ENCODE measurements at regions of chr12 and their contacts with region 1.

Region 1: DNA sequence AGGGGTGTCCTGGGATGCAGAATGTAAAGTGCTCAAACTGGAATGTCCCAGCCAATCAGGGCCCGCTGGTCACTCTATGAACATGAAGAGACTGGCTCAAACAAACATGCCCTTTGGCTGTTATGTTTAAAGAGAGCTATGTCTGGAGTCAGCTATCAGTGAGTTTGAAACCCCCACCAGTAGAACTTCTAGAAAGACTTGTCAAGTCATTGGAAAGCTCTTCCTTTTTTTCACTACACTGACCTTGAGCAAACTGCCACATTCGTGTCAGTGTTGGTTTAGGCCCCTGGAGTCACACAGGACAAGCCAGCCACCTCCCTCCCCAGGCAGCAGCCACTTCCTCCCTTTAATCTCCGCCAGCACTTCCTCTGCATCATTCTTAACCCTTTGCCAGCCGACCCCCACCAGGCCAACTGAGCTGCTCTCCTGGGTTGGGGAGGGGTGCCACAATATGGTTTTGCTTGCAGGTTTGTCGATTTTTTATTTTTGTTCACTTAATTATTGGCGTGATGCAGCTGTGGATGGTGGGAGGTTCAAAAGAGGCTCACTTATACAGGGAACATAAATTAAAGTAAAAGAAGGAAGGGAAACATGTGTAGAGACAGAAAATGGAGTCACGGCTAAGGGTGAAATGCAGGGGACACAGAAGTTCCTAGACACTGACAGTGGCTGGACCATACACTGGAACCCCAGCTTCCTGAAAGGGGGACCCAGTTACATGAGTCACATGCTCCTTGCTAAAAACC is 25.3 kb downstream of the CMKLR1 start:
- DNase-seq: peak in 3 of 9 experiments; percentile 32 to 51 (median 50)
- ATAC-seq: peak; percentile 71
- H3K4me3 ChIP-seq: no peak overlapping the region
- H3K4me3 Mint-ChIP-seq: peak overlapping the region; percentile 76
- H3K27ac ChIP-seq: peak overlapping the region in 1 of 2 experiments; percentile 39
- H3K27ac Mint-ChIP-seq: peak overlapping the region; percentile 85
- H3K4me1 ChIP-seq: peaks cover 25% of the 10 kb centered on the region
- H3K4me1 Mint-ChIP-seq: peaks cover 40% of the 10 kb centered on the region
- H3K27me3 ChIP-seq: no peaks in the 10 kb centered on the region
- H3K27me3 Mint-ChIP-seq: no peaks in the 10 kb centered on the region
- CTCF ChIP-seq: no peak

Region 2: DNA sequence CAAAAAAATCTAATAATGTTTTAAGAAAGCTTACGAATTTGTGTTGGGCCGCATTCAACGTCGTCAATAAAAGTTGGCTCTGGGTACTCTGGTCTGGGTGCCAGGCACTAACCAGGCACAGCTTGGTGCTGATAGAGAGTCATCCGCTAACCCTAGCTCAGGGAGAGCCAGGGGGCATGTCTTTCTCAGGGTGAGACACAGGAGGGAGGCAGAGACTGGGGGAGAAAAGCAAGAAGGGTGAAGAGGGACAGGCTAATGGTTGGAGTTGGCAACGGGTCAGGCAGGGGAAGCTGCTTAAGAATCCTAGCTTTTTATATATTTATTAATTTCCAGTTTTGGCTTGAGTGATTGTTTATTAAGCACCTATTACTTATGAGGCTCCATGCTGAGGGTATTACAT is 79.6 kb before region 1 on chr12:
- CTCF ChIA-PET with region 1: no interaction called
- POLR2A ChIA-PET with region 1: no interaction called
- intact Hi-C with region 1: no loop called
- DNase-seq: peak in 2 of 9 experiments; percentile 29 to 41
- ATAC-seq: no peak
- H3K4me3 ChIP-seq: no peak overlapping the region
- H3K4me3 Mint-ChIP-seq: no peak overlapping the region
- H3K27ac ChIP-seq: no peak overlapping the region
- H3K27ac Mint-ChIP-seq: no peak overlapping the region
- H3K4me1 ChIP-seq: no peaks in the 10 kb centered on the region
- H3K4me1 Mint-ChIP-seq: no peaks in the 10 kb centered on the region
- H3K27me3 ChIP-seq: no peaks in the 10 kb centered on the region
- H3K27me3 Mint-ChIP-seq: peaks cover 35% of the 10 kb centered on the region
- CTCF ChIP-seq: no peak

Region 3: DNA sequence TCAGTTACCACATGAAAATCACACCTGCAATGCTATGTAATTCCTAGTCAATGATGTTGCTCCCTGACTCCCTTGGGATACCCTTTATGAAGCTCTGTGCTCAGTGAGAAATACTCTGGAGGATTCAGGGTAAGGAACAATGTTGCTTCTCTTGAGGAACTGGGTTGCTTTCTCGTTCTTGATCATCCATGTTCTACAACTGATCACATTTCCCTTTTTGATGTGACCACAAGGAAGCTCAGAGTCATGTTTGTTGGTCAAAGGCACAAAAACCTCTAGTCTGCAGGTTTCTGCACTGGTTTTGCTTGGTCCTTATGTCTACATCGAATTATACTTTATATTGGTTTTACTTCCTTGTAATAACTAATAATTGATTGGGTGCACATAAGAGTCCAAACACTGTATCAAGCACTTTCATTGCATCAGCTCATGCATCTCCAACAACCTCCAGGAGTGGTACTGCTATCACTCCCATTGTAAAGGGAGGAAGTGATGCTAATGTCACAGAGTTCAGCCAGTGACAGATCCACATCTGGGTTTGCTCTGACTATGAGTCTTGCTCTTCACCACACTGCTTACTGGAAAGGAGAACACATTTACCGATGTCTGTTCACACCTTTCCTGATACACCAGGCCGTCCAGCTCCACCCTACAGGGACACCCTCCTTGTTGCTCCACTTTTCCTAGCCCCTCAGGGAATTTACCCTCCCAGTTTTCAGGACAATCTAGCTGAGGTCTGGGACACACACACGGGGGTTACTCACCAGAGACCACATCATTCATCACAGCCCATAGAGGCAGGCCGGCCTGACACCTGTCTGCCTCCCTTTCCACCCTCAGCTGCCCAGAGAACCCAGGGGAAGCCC is 15.7 kb before region 1 on chr12:
- CTCF ChIA-PET with region 1: no interaction called
- POLR2A ChIA-PET with region 1: interaction called, 6 read pairs
- intact Hi-C with region 1: loop called in 1 of 2 experiments (anchors 2 kb)
- DNase-seq: no peak
- ATAC-seq: no peak
- H3K4me3 ChIP-seq: no peak overlapping the region
- H3K4me3 Mint-ChIP-seq: no peak overlapping the region
- H3K27ac ChIP-seq: peak overlapping the region in 1 of 2 experiments; percentile 64
- H3K27ac Mint-ChIP-seq: peak overlapping the region; percentile 58
- H3K4me1 ChIP-seq: no peaks in the 10 kb centered on the region
- H3K4me1 Mint-ChIP-seq: peaks cover 55% of the 10 kb centered on the region
- H3K27me3 ChIP-seq: no peaks in the 10 kb centered on the region
- H3K27me3 Mint-ChIP-seq: no peaks in the 10 kb centered on the region
- CTCF ChIP-seq: no peak

Region 4: GRCh38 chr12:108482717-108483212 is 169.0 kb after region 1 on chr12:
- CTCF ChIA-PET with region 1: no interaction called
- POLR2A ChIA-PET with region 1: no interaction called
- intact Hi-C with region 1: no loop called
- DNase-seq: no peak
- ATAC-seq: no peak
- H3K4me3 ChIP-seq: no peak overlapping the region
- H3K4me3 Mint-ChIP-seq: no peak overlapping the region
- H3K27ac ChIP-seq: no peak overlapping the region
- H3K27ac Mint-ChIP-seq: no peak overlapping the region
- H3K4me1 ChIP-seq: no peaks in the 10 kb centered on the region
- H3K4me1 Mint-ChIP-seq: no peaks in the 10 kb centered on the region
- H3K27me3 ChIP-seq: no peaks in the 10 kb centered on the region
- H3K27me3 Mint-ChIP-seq: peaks cover 52% of the 10 kb centered on the region
- CTCF ChIP-seq: no peak

Region 5: DNA sequence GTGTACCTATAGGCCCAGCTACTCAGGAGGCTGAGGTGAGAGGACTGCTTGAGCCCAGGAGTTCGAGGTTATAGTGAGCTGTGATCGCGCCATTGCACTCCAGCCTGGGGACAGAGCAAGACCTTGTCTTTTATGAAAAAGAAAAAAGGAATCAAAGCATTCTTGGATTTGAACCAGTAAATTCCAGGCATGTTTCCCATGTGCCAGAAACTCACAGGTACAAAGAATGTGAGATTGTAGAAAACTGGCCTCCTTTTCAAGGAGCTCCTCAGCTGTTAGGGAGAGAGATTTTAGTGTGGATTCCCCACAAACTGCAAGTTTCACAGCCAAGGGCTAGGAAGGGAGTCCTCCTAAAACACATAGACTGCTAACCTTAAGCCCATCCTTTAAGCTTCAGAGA is 900.4 kb after region 1 on chr12:
- CTCF ChIA-PET with region 1: no interaction called
- POLR2A ChIA-PET with region 1: no interaction called
- intact Hi-C with region 1: loop called in 1 of 2 experiments (anchors 5 kb)
- DNase-seq: no peak
- ATAC-seq: no peak
- H3K4me3 ChIP-seq: no peak overlapping the region
- H3K4me3 Mint-ChIP-seq: no peak overlapping the region
- H3K27ac ChIP-seq: no peak overlapping the region
- H3K27ac Mint-ChIP-seq: no peak overlapping the region
- H3K4me1 ChIP-seq: no peaks in the 10 kb centered on the region
- H3K4me1 Mint-ChIP-seq: no peaks in the 10 kb centered on the region
- H3K27me3 ChIP-seq: no peaks in the 10 kb centered on the region
- H3K27me3 Mint-ChIP-seq: no peaks in the 10 kb centered on the region
- CTCF ChIP-seq: no peak